Posterior vena cava (tissue), 2 donors: ENCODE measurements at regions of chr22 and their contacts with region 1.

Region 1: GRCh38 chr22:38941488-38941987 is 15.9 kb upstream of the APOBEC3A start:
- DNase-seq: no peak

Region 2: DNA sequence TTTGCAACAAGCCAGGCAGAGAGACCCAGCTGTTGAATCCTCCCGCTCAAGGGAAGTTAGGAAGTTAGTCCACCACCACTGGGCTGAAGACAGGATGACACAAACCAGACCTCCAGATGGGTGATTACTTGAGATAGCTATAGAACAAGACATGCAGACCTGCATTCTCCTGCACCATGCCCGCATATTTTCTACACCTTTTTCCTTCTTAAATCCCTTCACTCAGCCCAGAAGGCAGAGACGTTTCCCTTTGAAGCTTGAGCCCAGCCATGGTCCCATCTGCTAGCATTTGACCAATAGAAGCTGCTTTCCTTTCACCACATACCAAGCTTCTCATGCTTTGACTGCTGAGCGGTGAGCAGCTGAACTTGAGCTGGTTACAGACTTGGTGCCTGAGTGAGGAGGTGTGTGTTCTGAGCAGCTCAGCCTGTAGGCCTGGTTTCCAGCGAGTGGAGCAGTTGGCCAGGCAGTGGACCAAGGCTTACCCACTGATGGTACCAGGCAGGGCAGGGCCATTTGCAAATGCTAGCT is 40.4 kb before region 1 on chr22:
- intact Hi-C with region 1: no loop called
- DNase-seq: no peak

Region 3: DNA sequence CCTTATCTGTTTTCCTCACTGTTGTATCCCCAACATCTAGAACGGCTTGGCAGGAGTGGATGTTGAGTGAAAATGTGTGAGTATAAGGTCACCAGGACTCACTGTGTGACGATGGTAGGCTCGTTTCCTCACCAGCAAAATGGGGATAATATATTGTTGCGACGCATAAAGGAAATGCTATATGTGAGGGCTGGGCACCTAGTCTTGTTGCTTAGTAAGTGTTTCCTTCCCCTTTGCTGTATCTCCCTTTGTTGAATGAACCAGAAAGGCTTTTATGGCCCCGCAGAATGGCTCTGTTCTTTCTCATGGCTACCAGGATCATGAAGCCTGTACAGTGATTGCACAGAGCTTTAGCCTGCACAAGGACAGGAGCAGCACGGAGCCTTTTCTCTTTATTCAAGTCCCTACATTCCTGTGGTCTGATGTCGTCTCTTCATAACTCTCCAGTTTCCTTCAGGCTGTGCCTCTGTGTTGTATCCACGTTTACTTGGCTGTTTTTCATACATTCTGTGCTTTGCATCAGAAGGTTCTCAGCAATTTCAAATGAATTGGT is 1241.6 kb after region 1 on chr22:
- intact Hi-C with region 1: loop called in 1 of 2 experiments (anchors 5 kb)
- DNase-seq: no peak